ENCODE measurements at regions of chr4 and their contacts with region 1.

Region 1: GRCh38 chr4:168923526-168924194 is 86.4 kb downstream of the CBR4 start:
- DNase-seq: peak; percentile 74
- ATAC-seq: peak; percentile 78
- H3K4me3 ChIP-seq: no peak overlapping the region
- H3K27ac ChIP-seq: no peak overlapping the region
- H3K4me1 ChIP-seq: no peaks in the 10 kb centered on the region
- H3K27me3 ChIP-seq: no peaks in the 10 kb centered on the region
- CTCF ChIP-seq: peak; percentile 80

Region 2: DNA sequence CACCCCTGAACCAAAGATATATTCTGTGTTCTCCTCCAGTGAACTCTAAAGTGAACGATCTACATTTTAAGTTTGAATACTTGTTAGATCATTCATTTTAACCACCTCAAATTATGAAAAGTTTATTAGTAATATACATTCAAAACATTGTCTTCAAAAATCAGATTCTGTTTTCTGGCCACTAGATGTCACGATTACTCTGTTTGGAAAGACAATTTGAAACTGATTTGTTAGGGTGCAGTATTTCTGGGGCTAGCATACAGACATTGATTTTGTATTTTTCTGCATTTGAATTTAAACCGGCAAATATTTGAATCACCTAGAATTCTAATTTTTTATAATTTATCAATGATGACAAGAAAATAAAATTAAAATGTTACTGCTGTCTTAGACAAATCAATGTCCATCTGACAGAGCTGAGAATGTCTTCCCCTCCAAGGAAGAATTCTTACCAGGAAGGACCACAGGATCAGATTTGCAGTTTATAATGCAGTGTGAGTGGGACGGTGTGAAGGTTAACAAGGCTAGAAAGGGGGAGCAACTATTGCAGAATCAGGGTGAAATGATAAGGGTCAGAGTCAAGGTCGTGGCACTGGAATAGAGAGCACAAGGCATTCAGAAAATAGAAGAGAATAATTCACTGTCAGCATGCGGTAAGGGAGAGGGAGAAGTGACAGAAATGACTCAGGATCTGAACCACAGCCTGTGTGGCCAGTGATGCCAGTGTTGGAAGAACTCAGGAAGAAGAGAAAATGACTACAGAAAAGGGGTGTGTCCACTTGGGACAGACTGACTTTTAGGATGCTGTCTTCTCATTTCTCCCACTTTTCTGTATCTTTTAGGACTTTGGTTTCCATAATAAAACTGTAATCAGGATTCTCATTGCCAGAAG is 739.7 kb before region 1 on chr4:
- CTCF ChIA-PET with region 1: interaction called, 4 read pairs
- POLR2A ChIA-PET with region 1: no interaction called
- intact Hi-C with region 1: loop called (anchors 2 kb)
- DNase-seq: peak; percentile 55
- ATAC-seq: peak; percentile 64
- H3K4me3 ChIP-seq: no peak overlapping the region
- H3K27ac ChIP-seq: no peak overlapping the region
- H3K4me1 ChIP-seq: peaks cover 6% of the 10 kb centered on the region
- H3K27me3 ChIP-seq: no peaks in the 10 kb centered on the region
- CTCF ChIP-seq: peak; percentile 78

Region 3: DNA sequence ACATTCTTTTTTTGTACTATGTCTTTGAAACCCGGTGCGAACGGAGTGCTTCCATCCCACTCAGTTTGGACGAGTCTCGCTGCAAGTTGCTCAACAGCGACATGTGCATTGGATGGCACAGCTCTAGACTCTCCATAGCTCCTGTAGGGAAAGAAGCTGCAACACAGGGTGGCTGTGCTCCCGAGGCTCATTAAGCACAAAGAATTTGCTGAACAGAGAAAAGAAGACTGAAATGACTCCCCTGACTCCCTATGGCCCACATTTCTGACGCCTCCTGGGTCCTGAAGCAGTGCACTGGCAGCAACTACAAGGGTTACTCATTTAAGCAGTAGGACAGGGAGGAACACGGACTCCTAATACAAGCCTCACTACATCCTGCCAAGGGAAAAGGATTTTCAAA is 219.7 kb after region 1 on chr4:
- CTCF ChIA-PET with region 1: no interaction called
- POLR2A ChIA-PET with region 1: no interaction called
- intact Hi-C with region 1: no loop called
- DNase-seq: no peak
- ATAC-seq: peak; percentile 27
- H3K4me3 ChIP-seq: no peak overlapping the region
- H3K27ac ChIP-seq: no peak overlapping the region
- H3K4me1 ChIP-seq: peaks cover 39% of the 10 kb centered on the region
- H3K27me3 ChIP-seq: no peaks in the 10 kb centered on the region
- CTCF ChIP-seq: no peak

Region 4: DNA sequence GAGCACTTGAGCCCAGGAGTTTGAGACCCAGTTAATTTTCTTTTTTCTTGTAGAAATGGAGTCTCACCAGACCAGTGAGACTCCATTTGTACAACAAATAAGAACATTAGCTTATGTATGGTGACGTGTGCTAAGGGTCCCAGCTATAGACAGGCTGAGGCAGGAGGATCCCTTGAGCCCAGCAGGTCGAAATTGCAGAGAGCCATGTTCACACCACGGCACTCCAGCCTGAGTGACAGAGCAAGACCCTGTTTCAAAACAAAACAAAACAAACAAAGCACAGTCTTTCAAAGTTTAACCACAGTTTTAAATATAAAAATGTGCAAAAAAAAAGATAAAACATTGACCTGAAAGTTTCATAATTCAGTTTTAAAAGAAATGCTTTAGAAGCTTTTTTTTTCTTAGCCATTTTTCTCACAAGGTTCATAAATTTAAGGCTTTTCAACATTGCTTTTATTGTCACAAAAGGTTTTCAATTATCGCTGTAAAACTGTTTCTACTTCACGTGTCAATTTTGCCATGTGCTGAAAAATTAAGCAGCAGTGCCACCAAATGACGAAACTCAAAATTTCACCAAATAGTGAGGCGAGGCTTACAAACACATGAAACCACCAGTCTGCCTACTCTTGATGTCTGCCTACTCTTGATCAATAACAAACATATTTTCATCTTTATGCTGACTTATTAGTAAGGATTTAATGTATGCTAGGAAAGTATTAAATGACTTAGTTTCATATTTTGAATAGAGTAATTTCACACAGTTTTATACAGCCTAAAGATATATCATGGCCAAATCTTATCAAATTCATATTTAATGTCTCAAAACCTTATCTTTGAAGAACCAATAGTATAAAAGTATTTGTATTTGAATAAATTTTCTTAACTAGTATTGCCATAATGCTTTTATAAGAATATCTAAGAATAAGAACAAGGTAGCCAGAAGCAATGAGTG is 562.4 kb after region 1 on chr4:
- CTCF ChIA-PET with region 1: no interaction called
- POLR2A ChIA-PET with region 1: no interaction called
- intact Hi-C with region 1: loop called (anchors 2 kb)
- DNase-seq: peak; percentile 74
- ATAC-seq: peak; percentile 54; the same call in 1 of the 2 replicates
- H3K4me3 ChIP-seq: peak overlapping the region; percentile 28
- H3K27ac ChIP-seq: no peak overlapping the region
- H3K4me1 ChIP-seq: peaks cover 18% of the 10 kb centered on the region
- H3K27me3 ChIP-seq: no peaks in the 10 kb centered on the region
- CTCF ChIP-seq: peak; percentile 75

Region 5: DNA sequence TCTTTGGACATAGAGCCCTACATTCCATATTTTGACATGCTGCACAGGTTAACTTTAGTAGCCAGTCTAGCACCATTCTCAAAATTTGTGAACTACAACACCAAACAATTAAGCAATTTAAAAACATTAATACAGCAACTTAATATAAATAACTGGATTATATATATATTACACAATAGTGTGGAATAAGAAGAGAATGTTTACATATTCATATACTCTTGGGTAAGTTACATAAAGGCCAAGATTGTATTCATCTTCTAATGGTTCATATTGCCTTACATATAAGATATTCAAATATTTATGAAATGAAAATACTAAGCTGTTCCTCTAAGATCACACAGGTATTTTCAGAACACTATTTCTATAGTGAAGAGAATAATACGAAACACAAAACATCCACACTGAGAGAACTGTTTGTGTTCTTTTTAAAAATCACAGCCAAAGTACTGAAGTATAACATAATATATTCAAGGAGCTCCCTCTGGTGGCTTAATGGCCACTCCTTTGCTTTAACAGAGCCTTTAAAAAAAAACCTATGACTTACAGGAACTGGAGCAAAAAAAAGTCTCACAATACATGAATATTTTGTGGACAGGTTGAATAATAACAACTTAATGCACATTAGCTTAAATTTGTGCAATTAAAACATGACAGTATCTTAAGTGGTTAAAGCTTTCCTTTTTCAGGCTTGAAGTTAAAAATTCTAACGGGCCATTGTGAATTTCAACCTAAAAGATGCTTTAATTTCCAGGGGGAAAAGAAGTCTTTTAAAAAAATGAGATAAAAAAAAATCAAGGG is 642.6 kb after region 1 on chr4:
- CTCF ChIA-PET with region 1: no interaction called
- POLR2A ChIA-PET with region 1: no interaction called
- intact Hi-C with region 1: loop called (anchors 1 kb)
- DNase-seq: peak; percentile 55
- ATAC-seq: peak; percentile 42
- H3K4me3 ChIP-seq: no peak overlapping the region
- H3K27ac ChIP-seq: no peak overlapping the region
- H3K4me1 ChIP-seq: no peaks in the 10 kb centered on the region
- H3K27me3 ChIP-seq: no peaks in the 10 kb centered on the region
- CTCF ChIP-seq: peak; percentile 79

Measured in PC-3 (cell line).